ENCODE measurements at regions of chr1 and their contacts with region 1.

Region 1: GRCh38 chr1:235971571-235972310 is 93.1 kb downstream of the NID1 start:
- DNase-seq: peak; percentile 94
- ATAC-seq: peak; percentile 99
- H3K4me3 ChIP-seq: peak overlapping the region; percentile 28 to 66 (median 55)
- H3K4me3 Mint-ChIP-seq: peak overlapping the region; percentile 79
- H3K27ac ChIP-seq: peak overlapping the region; percentile 72 to 86
- H3K27ac Mint-ChIP-seq: peak overlapping the region; percentile 95
- H3K4me1 ChIP-seq: peaks cover 17% of the 10 kb centered on the region in 2 donors
- H3K4me1 Mint-ChIP-seq: peaks cover 24% of the 10 kb centered on the region
- H3K27me3 ChIP-seq: no peaks in the 10 kb centered on the region
- H3K27me3 Mint-ChIP-seq: no peaks in the 10 kb centered on the region
- CTCF ChIP-seq: peak; percentile 85

Region 2: GRCh38 chr1:235199441-235199840 is 772.3 kb before region 1 on chr1:
- CTCF ChIA-PET with region 1: no interaction called
- POLR2A ChIA-PET with region 1: no interaction called
- intact Hi-C with region 1: no loop called
- DNase-seq: no peak
- ATAC-seq: no peak
- H3K4me3 ChIP-seq: no peak overlapping the region
- H3K4me3 Mint-ChIP-seq: no peak overlapping the region
- H3K27ac ChIP-seq: no peak overlapping the region
- H3K27ac Mint-ChIP-seq: no peak overlapping the region
- H3K4me1 ChIP-seq: no peaks in the 10 kb centered on the region
- H3K4me1 Mint-ChIP-seq: no peaks in the 10 kb centered on the region
- H3K27me3 ChIP-seq: no peaks in the 10 kb centered on the region
- H3K27me3 Mint-ChIP-seq: no peaks in the 10 kb centered on the region
- CTCF ChIP-seq: no peak

Region 3: DNA sequence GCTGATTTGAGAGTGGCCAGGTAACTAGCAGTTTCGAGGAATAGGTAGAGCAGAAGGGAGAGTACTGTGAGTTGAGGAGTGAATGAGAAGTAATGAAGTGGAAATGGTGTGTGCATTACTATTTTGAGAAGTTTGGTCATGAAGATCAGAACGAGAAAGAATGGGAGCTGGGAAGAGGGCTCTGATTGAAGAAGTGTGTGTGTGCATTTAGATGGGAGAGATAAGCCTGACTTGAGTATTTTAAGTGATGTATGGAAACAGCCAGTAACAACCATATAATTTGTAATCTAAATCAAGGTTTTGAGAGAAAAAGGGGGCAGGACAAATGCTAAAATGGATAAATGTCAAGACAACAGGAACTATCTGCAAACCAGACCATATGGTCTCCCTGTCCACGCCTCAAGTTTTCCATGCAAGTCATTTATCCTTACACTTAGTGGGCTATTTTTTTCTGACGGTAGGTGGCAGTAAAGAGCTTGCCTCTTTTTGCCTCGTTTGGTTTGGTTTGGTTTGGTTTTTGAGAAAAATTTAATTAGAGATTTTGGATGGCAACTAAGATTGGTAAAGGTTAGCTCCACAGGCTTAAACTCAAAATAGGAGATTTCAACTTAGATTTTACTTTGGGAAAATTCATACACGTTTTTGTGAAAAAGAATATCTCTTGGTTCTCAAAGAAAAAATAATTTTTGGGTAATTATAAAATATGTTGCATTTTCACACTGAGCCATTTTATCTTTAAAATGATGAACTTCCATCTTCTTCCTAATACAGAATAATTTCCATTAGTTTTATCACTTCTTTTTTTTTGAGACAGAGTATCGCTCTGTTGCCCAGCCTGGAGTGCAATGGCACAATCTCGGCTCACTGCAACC is 458.0 kb before region 1 on chr1:
- CTCF ChIA-PET with region 1: interaction called, 21 read pairs
- POLR2A ChIA-PET with region 1: no interaction called
- intact Hi-C with region 1: loop called (anchors 2 kb)
- DNase-seq: peak; percentile 74
- ATAC-seq: peak; percentile 64
- H3K4me3 ChIP-seq: no peak overlapping the region
- H3K4me3 Mint-ChIP-seq: no peak overlapping the region
- H3K27ac ChIP-seq: no peak overlapping the region
- H3K27ac Mint-ChIP-seq: no peak overlapping the region
- H3K4me1 ChIP-seq: no peaks in the 10 kb centered on the region
- H3K4me1 Mint-ChIP-seq: peaks cover 1% of the 10 kb centered on the region
- H3K27me3 ChIP-seq: no peaks in the 10 kb centered on the region
- H3K27me3 Mint-ChIP-seq: peaks cover 36% of the 10 kb centered on the region
- CTCF ChIP-seq: peak; percentile 94

Region 4: DNA sequence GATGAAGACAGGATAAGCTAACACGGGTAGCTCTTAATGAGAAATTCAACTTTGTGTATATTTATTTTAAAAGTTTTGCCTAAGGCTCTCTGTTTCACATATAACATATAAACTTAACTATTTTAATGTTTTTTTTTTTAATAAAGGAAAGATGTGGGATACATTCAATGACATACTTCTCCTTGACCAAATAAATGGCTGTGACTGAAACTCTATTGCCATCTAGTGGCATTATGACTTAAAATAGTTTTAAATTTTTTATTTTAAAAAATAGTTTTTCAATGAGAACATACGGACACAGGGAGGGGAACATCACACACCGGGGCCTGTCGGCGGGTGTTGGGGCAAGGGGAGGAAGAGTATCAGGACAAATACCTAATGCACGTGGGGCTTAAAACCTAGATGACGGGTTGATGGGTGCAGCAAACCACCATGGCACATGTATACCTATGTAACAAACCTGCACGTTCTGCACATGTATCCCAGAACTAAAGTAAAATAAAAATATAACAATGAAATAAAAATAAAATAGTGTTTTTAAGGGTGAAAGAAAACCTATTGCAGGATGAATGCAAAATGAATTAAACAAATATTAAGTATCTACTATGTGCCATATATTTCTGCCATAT is 188.5 kb before region 1 on chr1:
- CTCF ChIA-PET with region 1: interaction called, 66 read pairs
- POLR2A ChIA-PET with region 1: no interaction called
- intact Hi-C with region 1: loop called (anchors 1 kb)
- DNase-seq: no peak
- ATAC-seq: no peak
- H3K4me3 ChIP-seq: no peak overlapping the region
- H3K4me3 Mint-ChIP-seq: no peak overlapping the region
- H3K27ac ChIP-seq: no peak overlapping the region
- H3K27ac Mint-ChIP-seq: no peak overlapping the region
- H3K4me1 ChIP-seq: no peaks in the 10 kb centered on the region
- H3K4me1 Mint-ChIP-seq: no peaks in the 10 kb centered on the region
- H3K27me3 ChIP-seq: no peaks in the 10 kb centered on the region
- H3K27me3 Mint-ChIP-seq: no peaks in the 10 kb centered on the region
- CTCF ChIP-seq: peak; percentile 70

Region 5: GRCh38 chr1:235843461-235843961 is 128.2 kb before region 1 on chr1:
- CTCF ChIA-PET with region 1: interaction called, 136 read pairs
- POLR2A ChIA-PET with region 1: no interaction called
- intact Hi-C with region 1: loop called (anchors 5 kb)
- DNase-seq: peak; percentile 50
- ATAC-seq: peak; percentile 58
- H3K4me3 ChIP-seq: no peak overlapping the region
- H3K4me3 Mint-ChIP-seq: peak overlapping the region; percentile 42
- H3K27ac ChIP-seq: peak overlapping the region; percentile 71 to 84
- H3K27ac Mint-ChIP-seq: peak overlapping the region; percentile 73
- H3K4me1 ChIP-seq: peaks cover 65 to 67% of the 10 kb centered on the region in 2 donors
- H3K4me1 Mint-ChIP-seq: peaks cover 90% of the 10 kb centered on the region
- H3K27me3 ChIP-seq: no peaks in the 10 kb centered on the region
- H3K27me3 Mint-ChIP-seq: no peaks in the 10 kb centered on the region
- CTCF ChIP-seq: peak; percentile 74

Region 6: DNA sequence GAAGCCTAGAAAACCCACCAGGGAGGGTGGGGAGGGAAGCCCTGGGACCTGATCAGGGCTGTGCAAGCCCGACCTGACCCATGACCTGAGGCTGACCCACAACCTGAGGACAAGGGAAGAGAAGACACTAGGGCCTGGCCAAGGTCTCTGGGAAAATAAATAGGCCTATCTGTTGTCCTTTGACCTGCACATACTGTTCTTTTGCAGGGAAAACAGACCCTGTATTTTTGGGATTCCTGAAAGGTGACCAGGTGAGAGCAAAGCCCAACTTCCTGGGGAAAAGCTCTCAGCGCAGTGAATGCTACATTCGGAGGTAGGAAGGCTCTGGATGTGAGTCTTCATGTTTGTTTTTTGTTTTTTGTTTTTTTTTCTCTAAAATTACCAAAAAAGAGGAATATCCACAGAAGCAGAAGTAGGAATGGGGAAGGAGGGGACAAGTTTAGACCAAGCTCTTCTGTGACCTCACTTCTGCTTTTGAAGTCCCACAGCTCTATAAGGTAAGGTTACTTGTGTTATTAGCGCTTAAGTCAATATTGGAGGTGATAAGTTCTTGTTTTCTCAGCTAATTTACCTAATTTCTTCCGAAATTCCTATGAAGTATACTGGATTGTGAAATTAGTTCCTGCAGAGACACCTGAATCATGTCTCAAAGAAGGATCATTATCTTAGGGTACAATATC is 78.9 kb before region 1 on chr1:
- CTCF ChIA-PET with region 1: interaction called, 10 read pairs
- POLR2A ChIA-PET with region 1: no interaction called
- intact Hi-C with region 1: no loop called
- DNase-seq: peak; percentile 70
- ATAC-seq: peak; percentile 72
- H3K4me3 ChIP-seq: no peak overlapping the region
- H3K4me3 Mint-ChIP-seq: peak overlapping the region; percentile 3
- H3K27ac ChIP-seq: no peak overlapping the region
- H3K27ac Mint-ChIP-seq: peak overlapping the region; percentile 32
- H3K4me1 ChIP-seq: peaks cover 24 to 25% of the 10 kb centered on the region in 2 donors
- H3K4me1 Mint-ChIP-seq: peaks cover 33% of the 10 kb centered on the region
- H3K27me3 ChIP-seq: no peaks in the 10 kb centered on the region
- H3K27me3 Mint-ChIP-seq: no peaks in the 10 kb centered on the region
- CTCF ChIP-seq: no peak

Region 7: DNA sequence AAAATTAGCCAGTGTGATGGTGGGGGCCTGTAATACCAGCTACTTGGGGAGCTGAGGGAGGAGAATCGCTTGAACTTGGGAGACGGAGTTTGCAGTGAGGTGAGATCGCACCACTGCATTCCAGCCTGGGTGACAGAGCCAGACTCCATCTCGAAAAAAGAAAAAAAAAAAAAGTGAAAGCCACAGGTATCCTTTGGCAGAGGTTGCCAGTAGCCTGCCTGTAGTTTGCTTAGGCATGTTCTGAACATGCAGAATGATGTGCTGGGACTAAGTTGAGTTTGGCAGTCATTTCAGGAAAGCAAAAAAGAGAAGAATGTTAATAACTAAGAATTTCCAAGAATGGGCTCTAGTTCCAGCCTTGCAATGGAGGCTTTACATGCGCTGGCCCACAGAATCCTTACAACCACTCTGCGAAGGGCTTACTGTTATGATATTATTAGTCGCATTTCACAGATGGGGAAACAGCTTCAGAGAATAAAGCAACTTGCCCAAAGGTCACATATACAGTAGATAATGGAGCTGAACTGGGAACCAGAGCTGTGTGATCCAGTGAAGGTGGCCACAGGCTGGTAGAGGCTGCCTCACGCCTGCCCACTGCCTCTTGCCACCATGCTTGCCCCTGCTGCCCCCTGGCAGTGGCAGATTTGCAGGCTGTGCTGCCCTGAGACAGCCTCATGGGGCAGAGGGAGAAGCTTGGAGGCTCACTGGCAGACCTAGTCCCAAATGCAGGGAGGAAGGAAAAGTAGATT is 38.5 kb before region 1 on chr1:
- CTCF ChIA-PET with region 1: interaction called, 19 read pairs
- POLR2A ChIA-PET with region 1: interaction called, 8 read pairs
- intact Hi-C with region 1: loop called (anchors 2 kb)
- DNase-seq: peak; percentile 33
- ATAC-seq: no peak
- H3K4me3 ChIP-seq: no peak overlapping the region
- H3K4me3 Mint-ChIP-seq: peak overlapping the region; percentile 1
- H3K27ac ChIP-seq: peak overlapping the region; percentile 26 to 75
- H3K27ac Mint-ChIP-seq: peak overlapping the region; percentile 85
- H3K4me1 ChIP-seq: peaks cover 93 to 95% of the 10 kb centered on the region in 2 donors
- H3K4me1 Mint-ChIP-seq: peaks cover 80% of the 10 kb centered on the region
- H3K27me3 ChIP-seq: no peaks in the 10 kb centered on the region
- H3K27me3 Mint-ChIP-seq: no peaks in the 10 kb centered on the region
- CTCF ChIP-seq: no peak

Region 8: DNA sequence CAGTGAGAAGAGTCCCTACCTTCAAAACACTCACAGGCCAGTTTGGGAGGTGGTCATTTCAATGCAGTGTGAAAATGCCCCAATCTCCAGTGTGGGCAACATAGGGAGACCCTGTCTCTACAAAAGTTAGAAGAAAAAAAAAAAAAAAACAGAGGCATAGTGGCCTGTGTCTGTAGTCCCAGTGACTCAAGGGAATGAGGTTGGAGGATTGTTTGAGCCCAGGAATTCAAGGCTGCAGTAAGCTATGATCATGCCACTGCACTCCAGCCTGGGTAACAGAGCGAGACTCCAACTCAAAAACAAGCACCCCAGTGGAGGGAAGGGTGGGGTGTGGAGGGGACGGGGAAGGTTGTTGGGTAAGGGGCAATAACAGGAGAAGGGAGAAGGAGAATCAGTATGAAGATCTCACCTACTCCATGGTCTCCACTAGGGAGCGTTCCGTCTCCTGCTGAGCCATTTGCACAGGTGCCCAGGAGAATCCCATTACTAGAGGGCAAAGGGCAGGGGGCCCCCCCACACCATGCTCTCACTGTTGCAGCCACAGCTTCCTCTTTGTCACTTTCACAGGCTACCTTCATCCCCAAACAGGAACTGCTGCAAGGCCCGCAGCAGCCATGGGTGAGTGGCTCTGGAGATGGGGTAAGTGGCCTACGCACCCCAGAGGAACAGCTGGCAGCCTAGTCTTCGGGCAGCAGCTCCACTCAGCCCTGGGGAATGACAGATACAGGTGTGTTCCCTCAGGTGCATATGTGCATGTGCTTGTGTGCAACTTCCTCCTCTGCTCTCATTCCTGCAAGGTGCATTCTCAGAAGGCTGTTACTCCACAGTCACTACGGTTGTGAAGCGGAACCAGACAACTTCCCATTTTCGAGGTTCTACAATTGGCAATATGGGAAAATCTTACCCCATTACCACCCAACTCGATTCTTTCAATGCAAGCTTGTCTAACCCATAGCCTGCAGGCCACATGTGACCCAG is 17.1 kb before region 1 on chr1:
- CTCF ChIA-PET with region 1: interaction called, 112 read pairs
- POLR2A ChIA-PET with region 1: interaction called, 10 read pairs
- intact Hi-C with region 1: loop called (anchors 1 kb)
- DNase-seq: peak; percentile 95
- ATAC-seq: peak; percentile 88
- H3K4me3 ChIP-seq: peak overlapping the region in 3 of 5 experiments; percentile 18 to 37 (median 32)
- H3K4me3 Mint-ChIP-seq: peak overlapping the region; percentile 72
- H3K27ac ChIP-seq: peak overlapping the region; percentile 70 to 78
- H3K27ac Mint-ChIP-seq: peak overlapping the region; percentile 82
- H3K4me1 ChIP-seq: peaks cover 57 to 61% of the 10 kb centered on the region in 2 donors
- H3K4me1 Mint-ChIP-seq: peaks cover 71% of the 10 kb centered on the region
- H3K27me3 ChIP-seq: no peaks in the 10 kb centered on the region
- H3K27me3 Mint-ChIP-seq: no peaks in the 10 kb centered on the region
- CTCF ChIP-seq: no peak

Measured in B cell (primary cell).